Posterior vena cava (tissue), 2 donors: ENCODE measurements at regions of chr22 and their contacts with region 1.

Region 1: GRCh38 chr22:30763815-30764686 is 69.4 kb downstream of the OSBP2 start:
- DNase-seq: no peak

Region 2: DNA sequence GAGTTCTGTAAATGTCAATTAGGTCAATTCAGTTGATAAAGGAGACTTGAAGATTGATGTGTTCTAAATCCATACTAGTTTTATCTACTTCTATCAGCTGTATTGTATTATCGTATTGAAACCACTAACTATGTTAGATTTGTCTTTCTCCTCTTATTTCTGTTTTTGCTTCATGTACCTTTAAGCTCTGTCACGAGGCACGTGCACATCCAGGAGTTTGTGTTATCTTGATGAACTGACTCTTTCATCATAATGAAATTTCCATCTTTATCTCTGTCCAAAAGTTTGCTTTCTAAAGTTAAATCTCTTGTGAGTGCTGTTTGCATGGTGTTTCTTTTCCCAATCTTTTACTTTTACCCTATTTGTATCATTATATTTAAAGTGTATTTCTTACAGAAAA is 89.0 kb after region 1 on chr22:
- intact Hi-C with region 1: no loop called
- DNase-seq: no peak

Region 3: DNA sequence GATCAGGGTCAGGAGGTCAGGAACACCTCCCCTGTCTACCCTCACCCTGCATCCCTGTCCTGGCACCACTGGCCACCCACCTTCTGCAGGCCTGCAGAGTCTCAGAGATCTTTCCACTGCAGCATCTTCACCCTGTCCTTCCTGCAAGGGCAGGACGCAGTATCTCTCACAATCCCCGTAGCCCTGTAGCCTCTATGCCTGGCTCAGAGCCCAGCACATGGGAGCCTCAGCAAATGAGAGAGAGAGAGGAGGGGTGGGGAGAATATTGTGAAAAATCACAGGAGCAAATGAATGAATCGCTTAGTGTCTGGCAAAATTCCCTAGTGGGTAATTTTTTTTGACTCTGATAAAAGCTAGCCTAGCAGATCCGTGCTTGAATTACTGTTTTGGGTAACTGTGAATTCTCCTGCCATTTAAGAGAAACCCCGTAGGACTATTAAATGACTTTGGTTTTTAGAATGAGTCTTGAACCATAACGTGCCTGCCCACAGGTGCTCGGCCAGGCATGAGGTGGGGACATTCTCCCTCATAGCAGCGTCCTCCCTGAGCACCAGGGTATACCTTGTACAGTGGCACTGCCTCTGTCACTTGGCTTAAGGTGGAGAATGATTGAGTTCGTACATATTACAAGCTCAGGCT is 113.0 kb after region 1 on chr22:
- intact Hi-C with region 1: no loop called
- DNase-seq: peak; percentile 75

Region 4: GRCh38 chr22:30910358-30910757 is 146.3 kb after region 1 on chr22:
- intact Hi-C with region 1: loop called in 1 of 2 experiments (anchors 5 kb)
- DNase-seq: no peak

Region 5: DNA sequence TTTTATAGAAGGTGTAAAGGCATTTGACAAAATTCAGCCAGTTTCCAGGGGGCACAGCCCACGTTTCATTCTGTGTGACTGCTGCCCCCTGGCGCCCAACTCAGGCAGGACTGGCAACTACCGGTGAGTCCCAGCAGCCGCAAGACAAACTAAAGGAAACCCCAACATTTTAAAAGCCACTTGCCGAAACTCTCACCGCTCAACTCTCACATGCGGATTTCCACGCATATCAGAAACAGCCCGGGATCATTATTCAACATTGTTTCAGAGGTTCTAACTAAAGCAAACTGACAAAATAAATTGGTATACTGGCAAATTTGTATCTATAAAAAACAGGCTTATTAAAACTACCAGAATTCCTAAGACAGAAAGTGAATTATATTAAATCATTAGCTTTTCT is 156.4 kb after region 1 on chr22:
- intact Hi-C with region 1: loop called in 1 of 2 experiments (anchors 10 kb)
- DNase-seq: peak; percentile 92

Region 6: GRCh38 chr22:31122532-31123291 is 358.7 kb after region 1 on chr22 and contains the start of gene INPP5J:
- intact Hi-C with region 1: loop called in 1 of 2 experiments (anchors 10 kb)
- DNase-seq: peak; percentile 57
- total RNA-seq, gene INPP5J: 0.52 to 0.74 TPM